ENCODE measurements at regions of chr6 and their contacts with region 1.

Region 1: DNA sequence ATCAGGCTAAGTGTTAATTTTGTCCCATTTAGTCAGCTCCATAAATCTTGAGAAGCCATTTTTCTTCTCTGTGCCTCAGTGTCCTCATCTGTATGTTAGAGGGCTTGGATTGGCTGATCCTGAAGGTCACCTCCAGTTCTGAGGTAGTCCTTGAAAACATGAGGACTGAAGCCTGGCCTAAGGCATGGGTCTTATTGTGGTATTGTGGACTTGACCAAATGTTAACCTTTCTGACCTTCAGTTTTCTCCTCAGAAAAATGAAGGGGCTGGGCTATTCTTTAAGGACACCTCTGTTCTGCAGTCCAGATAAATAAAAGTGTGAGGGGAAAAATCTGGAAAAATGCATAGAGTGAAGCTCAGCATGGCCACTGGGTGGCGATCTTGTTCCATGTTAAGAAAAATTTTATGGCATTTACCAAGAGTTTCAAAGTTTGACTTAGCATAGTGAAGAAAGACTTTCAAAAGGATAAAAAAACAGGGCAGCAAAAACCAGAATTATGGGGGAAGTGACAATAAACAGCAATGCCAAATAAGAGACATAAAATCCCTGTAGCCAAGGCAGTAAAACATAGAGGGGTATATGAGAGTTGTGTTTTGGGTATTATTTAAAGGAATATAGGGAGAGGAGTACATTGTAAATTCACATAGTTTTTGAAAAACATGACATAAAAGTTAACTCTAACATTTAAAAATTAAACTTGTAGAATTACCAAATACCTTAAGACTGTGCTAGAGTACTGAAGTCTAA is 13.2 kb upstream of the TFB1M start:
- DNase-seq: peak; percentile 71 to 76
- H3K4me3 ChIP-seq: no peak overlapping the region
- H3K4me1 ChIP-seq: peaks cover 9% of the 10 kb centered on the region
- H3K27me3 ChIP-seq: no peaks in the 10 kb centered on the region

Region 2: DNA sequence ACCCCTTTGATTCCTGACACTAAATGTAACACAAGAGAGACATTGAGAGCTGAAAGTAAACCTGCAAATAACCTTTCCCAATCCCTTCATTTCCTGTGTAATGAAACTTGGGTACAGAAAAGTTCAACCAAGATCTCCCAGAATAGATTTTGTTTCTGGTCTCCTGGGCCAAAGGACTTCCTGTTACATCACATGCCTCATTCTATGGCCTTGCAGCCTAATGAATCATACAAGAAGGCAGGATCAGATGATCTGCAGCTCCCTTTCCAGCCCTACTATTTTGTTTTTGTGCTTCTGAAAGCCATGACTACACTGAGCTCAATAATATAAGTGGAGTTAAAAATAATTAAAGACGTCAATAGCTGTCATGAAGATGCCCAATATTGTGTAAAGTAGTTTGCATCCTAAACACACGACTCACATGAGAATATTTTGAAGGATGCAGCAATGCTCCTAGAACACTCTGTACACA is 201.5 kb after region 1 on chr6:
- in situ Hi-C with region 1: loop called (anchors 5 kb)
- DNase-seq: no peak
- H3K4me3 ChIP-seq: no peak overlapping the region
- H3K4me1 ChIP-seq: no peaks in the 10 kb centered on the region
- H3K27me3 ChIP-seq: no peaks in the 10 kb centered on the region

Measured in HAP-1 (cell line).